ENCODE measurements at regions of chr12 and their contacts with region 1.

Region 1: GRCh38 chr12:64796208-64796845 is 28.1 kb upstream of the TBC1D30 start:
- DNase-seq: peak in 1 of 2 experiments; percentile 58
- H3K4me3 ChIP-seq: no peak overlapping the region
- H3K27ac ChIP-seq: no peak overlapping the region
- H3K4me1 ChIP-seq: peaks cover 0 to 3% (median 0%) of the 10 kb centered on the region in 4 experiments; a peak in 1 of 7 replicates
- H3K27me3 ChIP-seq: no peaks in the 10 kb centered on the region
- CTCF ChIP-seq: peak in 2 of 3 experiments; percentile 65; a peak in 2 of 4 replicates
- EP300 ChIP-seq: no peak
- POLR2A ChIP-seq: no peak
- RAD21 ChIP-seq: peak; percentile 61 to 66

Region 2: GRCh38 chr12:64480148-64480547 is 316.2 kb before region 1 on chr12:
- CTCF ChIA-PET with region 1: no interaction called
- POLR2A ChIA-PET with region 1: no interaction called
- DNase-seq: no peak
- H3K4me3 ChIP-seq: no peak overlapping the region
- H3K27ac ChIP-seq: no peak overlapping the region
- H3K4me1 ChIP-seq: no peaks in the 10 kb centered on the region
- H3K27me3 ChIP-seq: no peaks in the 10 kb centered on the region
- CTCF ChIP-seq: no peak
- EP300 ChIP-seq: no peak
- POLR2A ChIP-seq: no peak
- RAD21 ChIP-seq: no peak

Region 3: DNA sequence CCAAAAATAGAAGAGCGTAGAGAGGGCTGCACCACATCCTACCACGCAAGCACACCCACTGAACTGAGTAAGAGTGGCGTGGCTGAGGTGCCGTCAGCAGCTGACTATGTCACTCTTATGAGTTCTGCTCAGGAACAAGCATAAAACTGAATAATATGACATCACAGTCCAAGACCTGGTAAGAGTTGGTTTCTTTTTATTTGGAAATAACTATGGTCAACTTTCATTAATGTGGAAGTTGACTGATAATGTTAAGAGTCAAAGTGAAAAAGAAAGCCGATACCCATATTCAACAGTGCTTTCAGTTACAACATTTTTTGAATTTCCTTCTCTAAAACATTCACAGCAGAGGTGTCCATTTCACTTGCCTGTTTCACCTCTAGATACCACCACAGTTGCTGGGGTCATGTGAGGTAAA is 81.8 kb before region 1 on chr12:
- CTCF ChIA-PET with region 1: no interaction called
- POLR2A ChIA-PET with region 1: no interaction called
- DNase-seq: no peak
- H3K4me3 ChIP-seq: no peak overlapping the region
- H3K27ac ChIP-seq: no peak overlapping the region
- H3K4me1 ChIP-seq: no peaks in the 10 kb centered on the region
- H3K27me3 ChIP-seq: no peaks in the 10 kb centered on the region
- CTCF ChIP-seq: no peak
- EP300 ChIP-seq: no peak
- POLR2A ChIP-seq: no peak
- RAD21 ChIP-seq: no peak

Region 4: DNA sequence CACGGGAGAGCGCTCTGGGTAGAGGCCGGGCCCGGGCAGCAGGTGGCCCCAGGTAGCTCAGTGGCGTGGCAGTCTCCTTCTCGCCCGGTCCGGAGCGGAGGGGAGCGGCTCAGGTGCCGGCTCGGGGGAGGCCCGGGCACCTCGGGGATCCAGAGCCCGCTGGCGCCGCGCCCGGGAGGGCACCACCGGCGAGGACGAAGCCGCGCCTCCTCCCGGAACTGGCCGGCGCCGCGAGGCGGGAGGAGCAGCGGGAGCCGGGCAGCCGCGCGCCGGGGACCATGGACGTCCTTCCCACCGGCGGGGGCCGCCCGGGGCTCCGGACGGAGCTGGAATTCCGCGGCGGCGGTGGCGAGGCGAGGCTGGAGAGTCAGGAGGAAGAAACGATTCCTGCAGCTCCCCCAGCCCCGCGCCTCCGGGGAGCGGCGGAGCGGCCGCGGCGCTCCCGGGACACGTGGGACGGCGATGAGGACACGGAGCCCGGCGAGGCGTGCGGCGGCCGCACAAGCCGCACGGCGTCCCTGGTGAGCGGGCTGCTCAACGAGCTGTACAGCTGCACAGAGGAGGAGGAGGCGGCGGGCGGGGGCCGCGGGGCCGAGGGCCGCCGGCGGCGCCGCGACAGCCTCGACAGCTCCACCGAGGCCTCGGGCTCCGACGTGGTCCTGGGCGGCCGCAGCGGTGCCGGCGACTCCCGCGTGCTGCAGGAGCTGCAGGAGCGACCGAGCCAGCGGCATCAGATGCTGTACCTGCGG is 15.6 kb before region 1 on chr12:
- CTCF ChIA-PET with region 1: interaction called, 34 read pairs
- POLR2A ChIA-PET with region 1: interaction called, 3 read pairs
- DNase-seq: peak in 1 of 2 experiments; percentile 73
- H3K4me3 ChIP-seq: peak overlapping the region; percentile 32 to 68 (median 48)
- H3K27ac ChIP-seq: no peak overlapping the region
- H3K4me1 ChIP-seq: peaks cover 0 to 6% (median 2%) of the 10 kb centered on the region in 4 experiments; a peak in 2 of 7 replicates
- H3K27me3 ChIP-seq: peaks cover 2 to 34% (median 22%) of the 10 kb centered on the region in 4 experiments
- CTCF ChIP-seq: no peak
- EP300 ChIP-seq: no peak
- POLR2A ChIP-seq: peak in 1 of 2 experiments; percentile 42; a peak in 2 of 3 replicates
- RAD21 ChIP-seq: no peak

Region 5: DNA sequence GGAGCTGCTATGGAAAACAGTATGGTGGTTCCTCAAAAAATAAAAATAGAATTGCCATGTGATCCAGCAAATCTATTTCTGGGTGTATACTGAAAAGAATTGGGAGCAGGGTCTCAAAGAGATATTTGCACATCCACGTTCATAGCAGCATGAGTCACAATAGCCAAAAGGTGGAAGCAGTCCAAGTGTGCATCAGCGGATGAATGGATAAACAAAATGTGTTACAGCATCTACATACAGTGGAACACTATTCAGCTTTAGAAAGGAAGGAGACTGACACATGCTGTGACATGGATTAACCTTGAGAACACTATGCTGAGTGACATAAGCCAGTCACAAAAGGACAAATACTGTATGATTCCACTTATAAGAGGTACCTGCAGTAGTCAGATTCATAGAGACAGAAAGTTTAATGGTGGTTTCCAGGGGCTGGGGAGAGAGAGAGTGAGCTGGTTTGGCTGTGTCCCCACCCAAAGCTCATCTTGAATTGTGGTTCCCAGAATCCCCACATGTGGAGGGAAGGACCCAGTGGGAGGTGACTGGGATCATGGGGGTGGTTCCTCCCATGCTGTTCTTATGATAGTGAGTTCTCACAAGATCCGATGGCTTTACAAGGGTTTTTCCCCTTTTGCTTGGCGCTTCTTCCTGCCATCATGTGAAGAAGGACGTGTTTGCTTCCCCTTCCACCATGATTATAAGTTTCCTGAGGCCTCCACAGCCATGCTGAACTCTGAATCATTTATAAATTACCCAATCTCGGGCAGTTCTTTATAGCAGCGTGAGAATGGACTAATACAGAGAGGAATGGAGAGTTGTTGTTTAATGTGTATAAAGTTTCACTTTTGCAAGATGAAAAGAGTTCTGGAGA is 10.5 kb after region 1 on chr12:
- CTCF ChIA-PET with region 1: interaction called, 25 read pairs
- POLR2A ChIA-PET with region 1: interaction called, 3 read pairs
- DNase-seq: no peak
- H3K4me3 ChIP-seq: no peak overlapping the region
- H3K27ac ChIP-seq: no peak overlapping the region
- H3K4me1 ChIP-seq: no peaks in the 10 kb centered on the region
- H3K27me3 ChIP-seq: peaks cover 0 to 1% (median 0%) of the 10 kb centered on the region in 4 experiments; a peak in 1 of 7 replicates
- CTCF ChIP-seq: no peak
- EP300 ChIP-seq: no peak
- POLR2A ChIP-seq: no peak
- RAD21 ChIP-seq: no peak